Ascending aorta (tissue), 2 donors: ENCODE measurements at regions of chr17 and their contacts with region 1.

Region 1: DNA sequence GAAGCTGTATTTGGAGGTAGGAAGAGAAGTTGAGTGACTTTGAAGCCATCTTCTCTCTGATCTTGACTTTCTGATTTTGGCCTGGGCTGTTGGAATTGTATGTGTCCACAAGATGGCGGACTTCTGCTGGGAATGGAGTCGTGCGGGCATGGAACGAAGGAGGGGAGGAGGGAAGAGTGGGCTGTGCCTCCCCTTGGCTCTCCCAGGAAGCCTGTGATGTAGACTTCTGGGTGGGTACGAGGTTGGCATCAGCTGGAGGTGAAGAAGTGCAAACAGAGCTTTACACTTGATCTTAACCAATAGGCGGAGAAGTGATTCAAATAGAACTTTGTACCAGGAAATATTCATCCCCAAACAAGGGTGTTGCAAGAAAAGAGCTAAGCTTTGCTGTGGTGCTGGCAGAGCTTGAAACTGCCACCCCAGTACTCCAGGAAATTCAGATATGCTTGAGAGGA is 7.4 kb upstream of the TMEM220 start:
- DNase-seq: peak in 1 of 2 donors; percentile 82
- H3K4me3 ChIP-seq: no peak overlapping the region
- H3K27ac ChIP-seq: no peak overlapping the region
- H3K4me1 ChIP-seq: no peaks in the 10 kb centered on the region
- H3K27me3 ChIP-seq: no peaks in the 10 kb centered on the region
- CTCF ChIP-seq: peak; percentile 46 to 82 (median 77)

Region 2: GRCh38 chr17:10844621-10845387 is 107.6 kb after region 1 on chr17:
- intact Hi-C with region 1: loop called (anchors 1 kb)
- DNase-seq: peak in 1 of 2 donors; percentile 84
- H3K4me3 ChIP-seq: peak overlapping the region; percentile 57 to 72
- H3K27ac ChIP-seq: no peak overlapping the region
- H3K4me1 ChIP-seq: peaks cover 0 to 4% of the 10 kb centered on the region in 2 donors
- H3K27me3 ChIP-seq: no peaks in the 10 kb centered on the region
- CTCF ChIP-seq: peak; percentile 74 to 95 (median 94)